AG04449 (cell line): ENCODE measurements at regions of chr16 and their contacts with region 1.

Region 1: DNA sequence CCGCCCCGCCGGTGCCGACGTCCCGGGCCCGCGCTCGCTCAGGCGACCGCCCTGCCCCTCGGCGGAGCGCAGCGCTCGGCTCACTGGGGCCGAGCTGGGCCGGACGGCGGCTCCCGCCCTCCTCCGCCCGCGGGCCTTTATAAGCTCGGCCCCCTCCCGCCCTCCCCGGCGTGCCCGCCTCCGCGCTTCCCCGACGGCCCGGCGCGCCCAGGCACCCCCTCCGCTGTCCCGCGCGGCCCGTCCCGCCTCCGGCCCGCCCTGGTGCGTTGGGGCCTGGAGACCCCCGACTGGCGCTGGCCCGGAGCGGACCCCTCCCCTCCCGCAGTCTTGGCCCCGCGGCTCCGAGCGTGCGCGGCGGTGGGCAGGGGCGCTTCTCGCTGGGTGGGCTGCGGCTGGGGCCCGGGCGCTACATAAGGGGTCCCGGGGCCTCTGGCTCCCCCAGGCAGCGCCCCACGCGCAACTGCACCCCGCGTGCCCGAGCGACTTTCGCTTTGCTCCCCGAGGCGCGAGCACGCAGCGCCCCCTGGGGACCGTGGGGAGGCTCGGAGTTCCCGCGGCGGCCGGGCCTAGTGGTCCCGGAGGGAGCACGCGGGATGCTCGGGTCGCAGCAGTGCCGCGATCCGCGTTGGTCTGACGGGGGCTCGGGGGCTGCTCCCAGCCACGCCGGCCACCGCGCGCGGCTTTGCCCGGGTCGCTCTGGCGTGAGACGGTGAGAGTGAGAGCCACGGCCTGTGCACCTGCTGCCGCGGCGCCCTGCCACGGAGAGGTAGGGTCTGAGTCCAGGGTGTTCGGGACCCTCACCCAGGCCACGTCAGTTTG is at the start of gene PIEZO1:
- DNase-seq: no peak
- H3K4me3 ChIP-seq: peak within 1 kb of the TSS; percentile 75
- CTCF ChIP-seq: peak; percentile 98

Region 2: DNA sequence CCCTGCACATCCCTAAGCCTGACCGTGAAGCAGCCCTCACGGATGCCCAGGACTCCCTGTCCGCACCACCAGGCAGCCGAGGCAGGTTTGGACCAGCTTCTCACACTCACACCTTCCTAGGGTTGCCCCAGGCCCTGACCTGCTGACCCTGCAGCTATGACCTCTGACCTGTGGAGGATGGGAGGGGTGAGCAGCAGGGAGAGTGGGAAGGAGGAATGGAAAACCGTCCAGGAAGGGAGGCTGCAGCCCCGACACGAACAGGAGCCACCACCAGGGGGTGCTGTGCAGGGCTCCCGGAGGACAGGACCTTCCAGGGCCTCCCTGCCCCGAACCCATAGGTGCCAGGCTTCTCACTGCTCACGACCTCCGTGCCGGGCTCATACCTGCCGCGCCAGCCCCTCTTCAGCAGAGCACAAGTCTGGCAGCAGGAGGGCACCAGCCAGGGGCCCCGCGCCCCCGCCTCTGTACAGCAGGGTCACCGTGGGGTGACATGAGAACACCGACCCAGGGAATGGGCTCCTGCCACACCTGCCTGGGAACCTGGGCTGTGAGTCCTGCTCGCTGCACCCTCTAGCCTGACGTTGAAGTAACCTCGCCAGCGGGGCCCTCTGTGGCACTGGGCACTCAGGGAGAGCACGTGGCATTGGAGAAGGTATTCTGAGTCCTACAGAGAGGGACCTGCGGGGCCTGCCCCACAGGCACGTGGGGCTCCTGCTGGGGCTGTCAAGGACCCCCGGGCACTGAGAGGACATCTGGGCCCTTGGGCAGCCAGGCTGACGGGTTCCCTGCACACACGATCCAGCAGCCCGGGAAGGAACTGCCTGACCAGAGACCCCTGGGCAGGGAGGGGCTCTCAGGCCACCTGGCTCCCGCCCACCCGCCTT is 41.4 kb before region 1 on chr16:
- CTCF ChIA-PET with region 1: interaction called, 43 read pairs
- POLR2A ChIA-PET with region 1: interaction called, 3 read pairs
- DNase-seq: no peak
- H3K4me3 ChIP-seq: no peak overlapping the region
- CTCF ChIP-seq: peak; percentile 93

Region 3: DNA sequence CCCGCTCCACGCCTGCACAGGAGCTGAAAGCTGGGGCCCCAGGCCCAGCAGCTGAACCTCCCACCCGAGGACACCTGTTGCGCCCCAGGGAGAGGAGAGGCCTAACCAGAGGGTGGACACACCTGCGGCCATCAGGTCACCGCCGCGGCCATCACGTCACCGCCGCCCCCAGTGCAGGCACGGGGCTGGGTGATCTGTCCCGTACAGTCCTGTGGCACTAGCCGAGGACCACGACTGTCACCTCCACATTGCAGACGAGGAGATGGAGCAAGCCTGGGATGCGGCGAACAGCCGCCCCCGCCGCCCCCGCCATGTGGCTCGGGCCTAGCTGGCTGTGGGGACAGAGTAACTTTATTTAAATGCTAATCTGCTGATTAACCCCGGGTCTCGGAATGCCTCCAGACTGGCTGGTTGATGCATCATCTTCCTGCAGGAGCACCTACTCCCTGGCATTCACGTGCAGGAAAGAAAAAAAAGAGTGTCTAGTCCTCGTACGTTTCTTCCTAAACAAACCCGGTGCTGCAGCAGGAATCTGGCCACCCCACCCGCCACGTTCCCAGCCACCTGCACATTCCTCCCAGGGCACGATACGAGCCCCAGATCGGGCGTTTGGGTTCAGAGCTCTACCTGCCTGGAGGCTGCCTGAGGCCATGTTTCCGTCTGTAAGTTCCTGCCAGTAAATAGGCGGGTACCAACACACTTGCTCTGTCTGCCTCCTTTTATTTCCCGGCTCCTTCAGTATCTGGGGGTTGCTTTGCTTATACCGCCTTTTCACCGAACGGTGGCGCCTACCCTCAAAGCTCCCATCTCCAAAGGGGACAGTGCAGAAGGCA is 30.2 kb before region 1 on chr16:
- CTCF ChIA-PET with region 1: interaction called, 11 read pairs
- POLR2A ChIA-PET with region 1: interaction called, 13 read pairs
- DNase-seq: peak; percentile 54
- H3K4me3 ChIP-seq: no peak overlapping the region
- CTCF ChIP-seq: peak; percentile 42

Region 4: GRCh38 chr16:88770461-88771293 is 14.6 kb before region 1 on chr16:
- CTCF ChIA-PET with region 1: interaction called, 38 read pairs
- POLR2A ChIA-PET with region 1: interaction called, 95 read pairs
- DNase-seq: no peak
- H3K4me3 ChIP-seq: peak overlapping the region; percentile 18; the same call in 1 of the 2 replicates
- CTCF ChIP-seq: no peak